B cell (primary cell): ENCODE measurements at regions of chr11 and their contacts with region 1.

Region 1: DNA sequence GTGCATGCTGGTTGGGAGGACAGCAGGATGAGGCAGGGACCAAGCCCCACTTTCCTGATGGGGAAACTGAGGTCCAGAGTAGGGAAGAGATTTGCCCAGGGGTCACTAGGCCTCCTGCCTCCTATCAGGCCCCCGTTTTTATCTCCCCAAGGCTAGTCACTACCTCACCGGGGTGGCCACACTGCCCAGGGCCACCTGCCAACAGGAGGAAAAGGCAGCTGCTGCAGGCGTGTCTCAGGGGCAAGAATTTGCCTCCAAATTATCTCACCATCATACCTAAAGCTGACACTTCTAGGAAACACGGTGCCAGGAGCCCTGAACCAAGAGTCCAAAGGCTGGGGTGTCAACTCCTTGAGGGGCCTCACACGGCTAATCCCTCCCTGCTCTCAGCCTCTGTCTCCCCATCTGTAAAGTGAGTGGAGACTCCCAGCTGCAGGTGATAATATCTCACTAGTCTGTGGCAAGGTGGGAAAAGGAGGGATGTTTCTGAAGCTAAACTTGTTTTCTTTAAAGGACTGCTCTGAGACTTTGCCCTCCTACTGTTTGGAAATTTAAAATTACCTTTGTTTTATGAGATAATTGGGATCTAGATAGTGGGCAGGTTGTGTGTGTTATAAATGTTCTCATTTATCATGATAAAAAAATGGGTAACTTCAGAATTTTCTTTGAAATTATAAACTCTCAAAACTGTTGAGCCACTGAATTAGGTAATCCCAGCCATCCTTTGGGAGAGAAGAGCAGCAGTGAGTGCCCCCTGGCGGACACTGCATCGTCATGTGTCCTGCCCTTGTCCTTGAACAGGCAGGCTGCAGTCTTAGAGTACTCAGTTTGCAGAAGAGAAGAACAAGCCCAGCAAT is 60.0 kb downstream of the MYO7A start:
- DNase-seq: peak; percentile 58
- ATAC-seq: peak; percentile 43
- H3K4me3 ChIP-seq: no peak overlapping the region
- H3K4me3 Mint-ChIP-seq: no peak overlapping the region
- H3K27ac ChIP-seq: no peak overlapping the region
- H3K27ac Mint-ChIP-seq: no peak overlapping the region
- H3K4me1 ChIP-seq: no peaks in the 10 kb centered on the region
- H3K4me1 Mint-ChIP-seq: no peaks in the 10 kb centered on the region
- H3K27me3 ChIP-seq: no peaks in the 10 kb centered on the region
- H3K27me3 Mint-ChIP-seq: no peaks in the 10 kb centered on the region
- CTCF ChIP-seq: peak; percentile 82

Region 2: DNA sequence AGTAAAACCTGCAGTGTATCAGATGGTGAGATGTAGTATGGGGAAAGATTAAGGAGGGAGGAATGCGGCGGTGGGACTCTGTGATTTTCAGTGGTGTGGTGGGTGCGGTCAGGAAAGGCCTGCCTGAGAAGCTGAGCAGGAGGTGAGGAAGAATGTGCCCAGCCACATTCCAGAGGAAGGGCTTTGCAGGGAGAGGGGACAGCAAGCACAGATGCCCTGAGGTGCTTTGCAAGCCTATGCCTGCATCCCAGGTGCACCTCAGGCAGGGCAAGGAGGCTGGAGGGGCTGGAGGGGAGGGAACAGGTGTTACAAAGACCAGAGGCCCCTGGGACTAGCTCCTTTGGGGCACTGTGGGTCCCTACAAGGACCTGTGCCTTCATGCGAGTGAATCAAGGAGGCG is 17.9 kb before region 1 on chr11:
- CTCF ChIA-PET with region 1: no interaction called
- POLR2A ChIA-PET with region 1: no interaction called
- intact Hi-C with region 1: no loop called
- DNase-seq: no peak
- ATAC-seq: no peak
- H3K4me3 ChIP-seq: no peak overlapping the region
- H3K4me3 Mint-ChIP-seq: no peak overlapping the region
- H3K27ac ChIP-seq: no peak overlapping the region
- H3K27ac Mint-ChIP-seq: no peak overlapping the region
- H3K4me1 ChIP-seq: no peaks in the 10 kb centered on the region
- H3K4me1 Mint-ChIP-seq: peaks cover under 1% of the 10 kb centered on the region
- H3K27me3 ChIP-seq: no peaks in the 10 kb centered on the region
- H3K27me3 Mint-ChIP-seq: no peaks in the 10 kb centered on the region
- CTCF ChIP-seq: no peak

Region 3: DNA sequence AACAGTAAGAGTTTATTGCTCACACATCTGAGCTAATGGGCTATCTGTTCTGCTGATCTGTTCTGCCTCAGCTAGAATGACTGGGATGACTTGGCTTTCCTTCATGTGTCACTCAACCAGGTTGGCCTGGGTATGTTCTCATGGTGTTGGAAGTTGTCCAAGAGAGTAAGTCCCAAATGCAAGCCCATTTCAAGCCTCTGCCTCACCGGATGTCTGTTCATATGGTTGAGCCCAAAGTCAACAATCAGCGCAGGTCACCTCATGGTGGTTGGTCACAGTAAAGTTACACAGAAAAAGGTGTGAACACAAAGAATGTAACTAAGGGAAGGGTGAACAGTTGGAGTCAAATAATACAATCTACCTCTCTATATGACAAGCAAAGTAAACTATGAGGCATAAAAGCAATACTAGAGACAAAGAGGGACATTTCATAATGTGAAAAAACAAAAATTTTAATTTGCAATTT is 111.6 kb after region 1 on chr11:
- CTCF ChIA-PET with region 1: no interaction called
- POLR2A ChIA-PET with region 1: no interaction called
- intact Hi-C with region 1: no loop called
- DNase-seq: no peak
- ATAC-seq: no peak
- H3K4me3 ChIP-seq: no peak overlapping the region
- H3K4me3 Mint-ChIP-seq: no peak overlapping the region
- H3K27ac ChIP-seq: no peak overlapping the region
- H3K27ac Mint-ChIP-seq: no peak overlapping the region
- H3K4me1 ChIP-seq: no peaks in the 10 kb centered on the region
- H3K4me1 Mint-ChIP-seq: no peaks in the 10 kb centered on the region
- H3K27me3 ChIP-seq: no peaks in the 10 kb centered on the region
- H3K27me3 Mint-ChIP-seq: peaks cover 2% of the 10 kb centered on the region
- CTCF ChIP-seq: no peak

Region 4: GRCh38 chr11:77547863-77548551 is 360.0 kb after region 1 on chr11:
- CTCF ChIA-PET with region 1: interaction called, 4 read pairs
- POLR2A ChIA-PET with region 1: no interaction called
- intact Hi-C with region 1: loop called (anchors 1 kb)
- DNase-seq: peak; percentile 69
- ATAC-seq: peak; percentile 28
- H3K4me3 ChIP-seq: no peak overlapping the region
- H3K4me3 Mint-ChIP-seq: no peak overlapping the region
- H3K27ac ChIP-seq: no peak overlapping the region
- H3K27ac Mint-ChIP-seq: no peak overlapping the region
- H3K4me1 ChIP-seq: no peaks in the 10 kb centered on the region
- H3K4me1 Mint-ChIP-seq: peaks cover 4% of the 10 kb centered on the region
- H3K27me3 ChIP-seq: no peaks in the 10 kb centered on the region
- H3K27me3 Mint-ChIP-seq: no peaks in the 10 kb centered on the region
- CTCF ChIP-seq: peak; percentile 84

Region 5: DNA sequence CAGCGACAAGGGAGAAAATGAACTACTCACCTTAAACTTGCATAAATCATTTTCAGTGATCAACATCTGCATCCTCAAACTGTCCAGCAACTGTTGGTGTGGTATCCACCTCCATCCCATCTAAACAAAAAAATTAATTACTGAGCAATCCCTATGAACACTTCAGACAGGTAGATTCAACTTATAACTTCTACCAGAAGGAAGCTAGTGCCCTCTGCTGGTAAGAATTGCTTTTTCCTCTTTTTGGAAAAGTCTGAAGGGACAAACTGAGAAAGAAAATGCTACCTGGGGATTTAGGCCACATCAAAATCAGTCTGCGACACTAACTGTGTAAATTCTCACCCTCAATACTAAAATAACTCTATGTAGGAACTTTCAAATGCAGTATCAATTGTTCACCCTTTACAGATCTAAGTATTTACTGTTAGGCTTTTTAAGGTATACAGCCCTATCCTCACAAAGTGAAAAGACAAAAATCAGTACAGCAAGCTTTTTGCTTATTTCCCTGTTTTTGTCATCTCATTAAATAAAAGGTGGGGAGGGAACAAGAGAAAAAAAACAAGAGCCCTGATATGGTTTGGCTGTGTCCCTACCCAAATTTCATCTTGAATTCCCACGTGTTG is 431.7 kb after region 1 on chr11:
- CTCF ChIA-PET with region 1: interaction called, 4 read pairs
- POLR2A ChIA-PET with region 1: no interaction called
- intact Hi-C with region 1: loop called (anchors 2 kb)
- DNase-seq: peak; percentile 65
- ATAC-seq: no peak
- H3K4me3 ChIP-seq: no peak overlapping the region
- H3K4me3 Mint-ChIP-seq: no peak overlapping the region
- H3K27ac ChIP-seq: no peak overlapping the region
- H3K27ac Mint-ChIP-seq: no peak overlapping the region
- H3K4me1 ChIP-seq: no peaks in the 10 kb centered on the region
- H3K4me1 Mint-ChIP-seq: no peaks in the 10 kb centered on the region
- H3K27me3 ChIP-seq: no peaks in the 10 kb centered on the region
- H3K27me3 Mint-ChIP-seq: no peaks in the 10 kb centered on the region
- CTCF ChIP-seq: peak; percentile 86